ENCODE measurements at regions of chr1 and their contacts with region 1.

Region 1: DNA sequence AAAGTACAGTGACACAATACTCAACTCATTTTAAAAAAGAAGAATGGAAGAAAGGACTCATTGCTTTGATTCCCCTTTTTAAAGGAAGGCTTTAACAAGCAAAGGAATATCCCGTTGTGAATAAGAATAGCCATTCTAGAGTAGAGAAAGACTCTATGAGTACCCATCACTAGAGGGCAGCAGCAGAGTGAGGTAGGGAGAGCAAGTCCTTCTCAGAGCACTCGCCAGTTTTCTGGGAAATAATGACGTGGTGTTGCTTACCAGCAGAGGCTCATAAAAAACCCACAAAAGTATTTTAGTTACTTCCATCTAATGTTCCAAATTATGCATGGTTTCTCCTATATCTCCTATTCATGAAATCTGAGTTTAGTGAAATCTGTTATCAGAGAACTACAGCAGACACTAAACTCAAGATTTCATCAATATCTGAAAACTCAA is 74.6 kb downstream of the USP24 start:
- DNase-seq: peak in 1 of 2 donors; percentile 88
- ATAC-seq: peak; percentile 82 to 97 (median 94)
- H3K4me3 ChIP-seq: no peak overlapping the region
- H3K27ac ChIP-seq: peak overlapping the region in 5 of 10 donors; percentile 5 to 50 (median 30)
- H3K4me1 ChIP-seq: peaks cover 0 to 21% (median 4%) of the 10 kb centered on the region in 9 donors
- H3K27me3 ChIP-seq: no peaks in the 10 kb centered on the region
- CTCF ChIP-seq: peak; percentile 58 to 94 (median 84)

Region 2: DNA sequence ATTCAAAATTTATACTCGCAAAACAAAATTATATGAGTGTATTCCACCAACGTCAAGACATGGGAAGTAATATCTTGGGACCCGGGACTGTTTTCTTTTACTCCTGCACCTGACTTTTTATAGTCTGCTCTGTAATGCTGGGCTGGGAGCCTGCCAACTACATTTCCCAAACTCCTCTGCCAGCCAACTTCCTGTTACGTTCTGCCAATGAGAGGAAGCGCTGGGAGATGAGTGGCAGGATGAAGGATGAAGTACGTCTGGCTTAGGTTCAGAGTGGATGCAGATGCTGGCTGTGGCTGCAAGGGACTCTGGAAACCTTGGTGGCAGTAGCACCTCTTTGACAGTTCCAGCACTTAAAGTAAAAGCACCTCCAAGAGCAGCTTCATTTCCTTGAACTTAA is 14.9 kb after region 1 on chr1:
- intact Hi-C with region 1: loop called in 1 of 10 experiments (anchors 2 kb)
- DNase-seq: peak; percentile 33 to 76
- ATAC-seq: peak; percentile 50 to 95 (median 89)
- H3K4me3 ChIP-seq: no peak overlapping the region
- H3K27ac ChIP-seq: no peak overlapping the region
- H3K4me1 ChIP-seq: peaks cover 0 to 21% (median 0%) of the 10 kb centered on the region in 9 donors
- H3K27me3 ChIP-seq: no peaks in the 10 kb centered on the region
- CTCF ChIP-seq: no peak

Region 3: DNA sequence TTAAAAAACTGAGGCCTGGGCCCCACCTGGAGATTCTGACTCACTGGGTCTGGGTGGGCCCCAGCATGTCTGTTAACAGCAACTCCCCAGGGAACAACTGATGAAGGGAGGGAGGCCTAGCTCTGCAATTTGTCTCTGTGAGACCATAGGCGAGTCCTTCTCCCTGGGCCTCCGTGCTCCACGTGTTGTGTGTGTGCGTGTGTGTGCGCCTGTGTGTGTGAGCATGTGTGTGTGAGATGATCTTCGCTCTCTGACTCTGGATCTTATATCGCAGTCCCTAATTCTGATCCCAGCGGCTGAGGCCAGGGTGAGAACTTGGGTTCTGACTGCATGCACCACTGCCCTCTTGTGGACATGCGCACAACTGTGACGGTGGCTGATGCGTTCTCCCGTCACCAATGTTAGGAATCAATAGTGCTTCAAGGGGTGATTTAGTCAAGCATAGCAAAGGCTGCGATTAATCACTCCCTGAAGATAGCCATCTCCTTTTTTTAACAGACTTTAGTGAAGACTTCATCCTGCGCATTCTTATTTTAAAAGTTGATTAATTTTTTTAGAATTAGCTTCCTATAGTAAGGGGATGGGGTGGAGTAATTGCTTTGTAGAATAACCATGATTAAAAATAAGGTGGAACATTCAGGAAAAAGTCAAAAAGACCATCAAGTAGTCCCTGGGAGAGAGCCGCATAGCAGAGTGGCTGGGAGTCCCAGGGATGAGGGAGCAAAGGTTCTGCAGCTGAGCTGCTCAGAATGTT is 137.0 kb after region 1 on chr1:
- intact Hi-C with region 1: loop called (anchors 1 to 5 kb)
- DNase-seq: peak; percentile 77 to 79
- ATAC-seq: peak; percentile 87 to 94 (median 90)
- H3K4me3 ChIP-seq: no peak overlapping the region
- H3K27ac ChIP-seq: peak overlapping the region in 3 of 10 donors; percentile 0 to 58 (median 20)
- H3K4me1 ChIP-seq: peaks cover 0 to 27% (median 14%) of the 10 kb centered on the region in 9 donors
- H3K27me3 ChIP-seq: no peaks in the 10 kb centered on the region
- CTCF ChIP-seq: peak; percentile 82 to 95 (median 88)